ENCODE measurements at regions of chr11 and their contacts with region 1.

Region 1: GRCh38 chr11:58524232-58525036 is 16.5 kb upstream of the OR5B21 start:
- DNase-seq: peak; percentile 59
- H3K4me3 ChIP-seq: no peak overlapping the region
- CTCF ChIP-seq: peak; percentile 91

Region 2: DNA sequence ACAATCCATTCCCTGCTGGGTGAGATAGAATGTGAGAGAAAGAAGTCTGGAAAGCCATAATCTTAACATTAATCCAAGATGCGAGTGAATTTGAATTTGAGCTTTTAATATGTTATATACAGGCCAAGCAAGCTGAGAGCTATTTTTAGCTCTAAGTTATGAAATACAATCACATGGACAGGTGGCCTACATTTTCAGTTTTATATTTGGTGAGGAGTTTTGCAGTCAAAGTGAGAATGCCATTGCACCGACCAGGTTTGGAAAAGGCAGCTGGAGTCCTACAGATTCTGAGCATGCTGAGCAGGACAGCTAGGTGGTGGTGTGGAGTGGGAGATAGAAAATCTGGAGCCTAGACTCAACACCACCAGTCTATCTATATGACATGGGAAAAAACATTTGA is 28.5 kb before region 1 on chr11:
- CTCF ChIA-PET with region 1: interaction called, 11 read pairs
- POLR2A ChIA-PET with region 1: no interaction called
- DNase-seq: no peak
- H3K4me3 ChIP-seq: no peak overlapping the region
- CTCF ChIP-seq: no peak

Region 3: GRCh38 chr11:58503361-58503856 is 21.0 kb before region 1 on chr11:
- CTCF ChIA-PET with region 1: interaction called, 18 read pairs
- POLR2A ChIA-PET with region 1: no interaction called
- DNase-seq: no peak
- H3K4me3 ChIP-seq: no peak overlapping the region
- CTCF ChIP-seq: no peak

Region 4: DNA sequence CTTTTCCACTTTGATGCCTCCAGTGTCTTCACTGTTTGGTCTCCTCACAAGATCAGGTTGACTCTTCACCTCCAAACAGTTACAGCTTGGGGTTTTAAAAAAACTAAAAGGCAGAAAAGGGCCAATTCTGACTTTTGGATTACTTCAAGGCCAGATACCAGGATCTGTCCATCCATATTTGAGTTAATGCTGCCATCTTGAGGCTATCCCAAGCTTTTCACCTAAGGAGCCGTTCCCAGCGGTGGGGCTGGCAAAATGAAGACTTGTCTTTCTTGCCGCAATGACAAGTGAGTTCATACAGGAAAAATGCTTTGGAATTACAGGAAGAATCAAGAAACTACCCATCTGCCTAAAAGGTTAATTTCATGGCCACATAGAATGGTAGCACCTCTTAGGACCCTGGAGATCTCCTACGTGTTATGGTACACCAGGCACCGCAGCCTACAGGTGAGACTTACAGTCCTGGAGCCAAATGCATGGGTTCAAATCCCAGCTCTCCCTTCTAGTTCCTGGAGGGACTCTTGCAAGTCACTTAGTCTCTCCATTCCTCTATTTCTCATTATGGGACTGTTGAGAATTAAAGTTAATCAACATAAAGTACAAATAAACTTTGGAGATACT is 10.6 kb before region 1 on chr11:
- CTCF ChIA-PET with region 1: interaction called, 57 read pairs
- POLR2A ChIA-PET with region 1: no interaction called
- DNase-seq: no peak
- H3K4me3 ChIP-seq: no peak overlapping the region
- CTCF ChIP-seq: peak; percentile 48

Region 5: GRCh38 chr11:58567889-58568512 is 43.6 kb after region 1 on chr11:
- CTCF ChIA-PET with region 1: interaction called, 12 read pairs
- POLR2A ChIA-PET with region 1: no interaction called
- DNase-seq: no peak
- H3K4me3 ChIP-seq: no peak overlapping the region
- CTCF ChIP-seq: peak; percentile 83

Region 6: DNA sequence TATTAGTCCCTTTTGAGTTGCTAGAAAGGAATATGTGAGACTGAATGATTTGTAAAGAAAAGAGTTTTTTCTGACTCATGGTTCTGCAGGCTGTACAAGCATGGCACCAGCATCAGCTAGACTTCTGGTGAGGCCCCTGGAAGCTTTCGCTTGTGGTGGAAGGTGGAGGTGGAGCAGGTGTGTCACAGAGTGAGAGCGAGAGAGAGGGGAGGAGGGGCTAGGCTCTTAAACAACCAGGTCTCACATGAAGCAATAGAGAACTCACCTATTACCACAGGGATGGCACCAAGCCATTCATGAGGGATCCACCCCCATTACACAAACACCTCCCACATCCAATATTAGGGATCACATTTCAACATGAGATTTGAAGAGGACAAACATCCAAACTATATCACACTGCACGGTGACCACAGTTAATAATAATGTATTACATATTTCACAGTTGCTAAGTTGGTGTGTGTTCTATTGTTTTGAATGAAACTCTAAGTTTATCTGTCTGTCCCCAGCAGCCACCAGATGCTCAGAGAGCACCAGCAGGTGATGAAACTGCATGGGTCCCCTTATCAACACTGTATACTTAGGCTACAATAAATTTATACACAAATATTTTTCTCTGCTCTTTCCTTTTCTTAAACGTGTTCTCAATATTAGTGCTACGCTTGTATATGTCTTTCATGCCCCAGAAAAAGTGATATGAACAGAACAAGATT is 68.5 kb after region 1 on chr11:
- CTCF ChIA-PET with region 1: no interaction called
- POLR2A ChIA-PET with region 1: no interaction called
- DNase-seq: no peak
- H3K4me3 ChIP-seq: no peak overlapping the region
- CTCF ChIP-seq: no peak

Measured in AG04449 (cell line).